Activated CD4-positive, alpha-beta T cell treated with anti-CD3 and anti-CD28 coated beads for 36 hours (primary cell): ENCODE measurements at regions of chr6 and their contacts with region 1.

Region 1: GRCh38 chr6:26607434-26608230 is 10.9 kb downstream of the ABT1 start:
- DNase-seq: peak; percentile 74
- ATAC-seq: peak; percentile 91
- H3K4me3 Mint-ChIP-seq: peak overlapping the region; percentile 50
- H3K27ac Mint-ChIP-seq: peak overlapping the region; percentile 59
- H3K4me1 Mint-ChIP-seq: peaks cover 26% of the 10 kb centered on the region
- H3K27me3 Mint-ChIP-seq: no peaks in the 10 kb centered on the region

Region 2: GRCh38 chr6:25682324-25682723 is 925.3 kb before region 1 on chr6:
- CTCF ChIA-PET with region 1: no interaction called
- POLR2A ChIA-PET with region 1: no interaction called
- intact Hi-C with region 1: no loop called
- DNase-seq: no peak
- ATAC-seq: no peak
- H3K4me3 Mint-ChIP-seq: no peak overlapping the region
- H3K27ac Mint-ChIP-seq: no peak overlapping the region
- H3K4me1 Mint-ChIP-seq: no peaks in the 10 kb centered on the region
- H3K27me3 Mint-ChIP-seq: peaks cover 23% of the 10 kb centered on the region

Region 3: GRCh38 chr6:25706314-25707014 is 901.2 kb before region 1 on chr6:
- CTCF ChIA-PET with region 1: no interaction called
- POLR2A ChIA-PET with region 1: no interaction called
- intact Hi-C with region 1: no loop called
- DNase-seq: no peak
- ATAC-seq: no peak
- H3K4me3 Mint-ChIP-seq: no peak overlapping the region
- H3K27ac Mint-ChIP-seq: no peak overlapping the region
- H3K4me1 Mint-ChIP-seq: no peaks in the 10 kb centered on the region
- H3K27me3 Mint-ChIP-seq: peaks cover 13% of the 10 kb centered on the region

Region 4: GRCh38 chr6:27078734-27079357 is 471.2 kb after region 1 on chr6:
- CTCF ChIA-PET with region 1: no interaction called
- POLR2A ChIA-PET with region 1: no interaction called
- intact Hi-C with region 1: loop called (anchors 1 kb)
- DNase-seq: peak; percentile 48
- ATAC-seq: peak; percentile 85
- H3K4me3 Mint-ChIP-seq: peak overlapping the region; percentile 42
- H3K27ac Mint-ChIP-seq: no peak overlapping the region
- H3K4me1 Mint-ChIP-seq: no peaks in the 10 kb centered on the region
- H3K27me3 Mint-ChIP-seq: peaks cover 52% of the 10 kb centered on the region

Region 5: GRCh38 chr6:27126815-27127537 is 519.3 kb after region 1 on chr6:
- CTCF ChIA-PET with region 1: no interaction called
- POLR2A ChIA-PET with region 1: no interaction called
- intact Hi-C with region 1: loop called in 1 of 2 experiments (anchors 2 kb)
- DNase-seq: peak; percentile 89
- ATAC-seq: peak; percentile 74
- H3K4me3 Mint-ChIP-seq: peak overlapping the region; percentile 68
- H3K27ac Mint-ChIP-seq: peak overlapping the region; percentile 67
- H3K4me1 Mint-ChIP-seq: peaks cover 20% of the 10 kb centered on the region
- H3K27me3 Mint-ChIP-seq: no peaks in the 10 kb centered on the region